Right cardiac atrium (tissue), 5 donors: ENCODE measurements at regions of chr10 and their contacts with region 1.

Region 1: DNA sequence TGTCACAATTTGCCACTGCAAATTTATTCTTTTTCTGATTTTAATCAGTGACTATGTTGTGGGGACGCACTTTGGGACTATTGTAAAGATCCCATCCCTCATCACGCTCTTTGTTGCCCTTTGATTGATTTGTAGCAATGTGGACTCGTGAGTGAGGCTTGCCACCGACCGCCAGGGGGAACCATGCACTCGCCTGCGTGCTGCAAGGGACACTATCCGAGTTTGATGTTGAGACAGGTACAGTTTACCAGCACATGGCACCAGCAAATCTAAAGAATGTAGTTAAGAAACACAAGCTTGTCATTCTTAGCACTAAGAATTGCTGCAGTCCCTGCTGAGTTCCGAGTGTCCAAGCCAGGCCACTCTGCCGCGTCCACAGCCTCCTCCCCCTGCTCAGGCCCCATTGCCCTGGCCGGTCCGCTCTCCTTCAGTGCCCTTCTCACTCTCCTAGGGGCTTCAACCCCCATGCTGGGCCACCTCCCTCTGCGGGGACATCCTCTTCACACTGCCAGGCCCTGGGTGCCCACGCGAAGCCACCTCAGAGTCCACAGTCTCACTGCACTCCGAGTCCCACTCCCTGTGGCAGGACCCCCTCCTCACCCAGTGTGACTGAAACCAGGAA is 2.0 kb upstream of the SFTPA2 start:
- DNase-seq: peak; percentile 66 to 83 (median 82)
- ATAC-seq: peak; percentile 82
- H3K4me3 ChIP-seq: no peak overlapping the region
- H3K27ac ChIP-seq: no peak overlapping the region
- H3K4me1 ChIP-seq: no peaks in the 10 kb centered on the region
- H3K27me3 ChIP-seq: no peaks in the 10 kb centered on the region

Region 2: GRCh38 chr10:79487296-79488194 is 74.7 kb before region 1 on chr10:
- intact Hi-C with region 1: no loop called
- DNase-seq: peak; percentile 60 to 80 (median 74)
- ATAC-seq: peak; percentile 50 to 78
- H3K4me3 ChIP-seq: no peak overlapping the region
- H3K27ac ChIP-seq: peak overlapping the region; percentile 49
- H3K4me1 ChIP-seq: peaks cover 6% of the 10 kb centered on the region
- H3K27me3 ChIP-seq: no peaks in the 10 kb centered on the region

Region 3: GRCh38 chr10:79498291-79498829 is 63.9 kb before region 1 on chr10:
- intact Hi-C with region 1: no loop called
- DNase-seq: no peak
- ATAC-seq: no peak
- H3K4me3 ChIP-seq: no peak overlapping the region
- H3K27ac ChIP-seq: no peak overlapping the region
- H3K4me1 ChIP-seq: no peaks in the 10 kb centered on the region
- H3K27me3 ChIP-seq: no peaks in the 10 kb centered on the region

Region 4: GRCh38 chr10:79588800-79589199 is 26.6 kb after region 1 on chr10:
- intact Hi-C with region 1: no loop called
- DNase-seq: no peak
- ATAC-seq: no peak
- H3K4me3 ChIP-seq: no peak overlapping the region
- H3K27ac ChIP-seq: no peak overlapping the region
- H3K4me1 ChIP-seq: no peaks in the 10 kb centered on the region
- H3K27me3 ChIP-seq: no peaks in the 10 kb centered on the region

Region 5: GRCh38 chr10:79929409-79929904 is 367.2 kb after region 1 on chr10:
- intact Hi-C with region 1: loop called in 2 of 4 experiments (anchors 10 kb)
- DNase-seq: peak; percentile 87 to 93 (median 91)
- ATAC-seq: peak; percentile 90 to 91
- H3K4me3 ChIP-seq: no peak overlapping the region
- H3K27ac ChIP-seq: no peak overlapping the region
- H3K4me1 ChIP-seq: peaks cover 2% of the 10 kb centered on the region
- H3K27me3 ChIP-seq: no peaks in the 10 kb centered on the region